ENCODE measurements at regions of chr4 and their contacts with region 1.

Region 1: DNA sequence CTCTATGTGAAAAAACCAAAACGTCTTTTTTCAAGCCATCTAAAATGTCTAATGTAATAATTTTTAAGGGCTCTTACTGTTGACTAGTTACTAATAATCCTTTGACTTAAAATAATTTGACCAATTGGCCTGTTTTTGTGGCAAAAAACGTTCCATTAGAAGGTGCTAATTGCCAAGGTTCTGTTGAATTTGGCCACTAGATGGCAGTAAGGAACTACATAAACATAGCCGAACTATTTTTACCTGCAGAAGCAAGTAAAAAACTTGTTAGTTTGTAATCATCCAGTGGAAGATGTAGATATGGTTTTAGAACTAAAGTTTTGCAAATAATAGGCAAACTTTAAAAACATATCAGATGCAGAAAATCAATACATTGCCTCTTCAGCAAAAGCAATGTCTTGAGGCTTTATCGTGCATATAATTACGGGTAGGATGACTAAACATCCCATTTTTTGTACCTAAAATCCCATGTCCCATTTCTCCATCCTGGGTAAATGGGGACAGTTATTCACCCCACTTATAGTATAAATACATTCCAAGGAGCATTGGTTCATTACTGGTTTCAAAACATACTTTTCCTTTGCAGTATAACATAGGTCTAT is 57.6 kb downstream of the PROM1 start:
- DNase-seq: peak; percentile 54
- CTCF ChIP-seq: peak; percentile 76

Region 2: GRCh38 chr4:16169490-16169889 is 143.2 kb after region 1 on chr4:
- in situ Hi-C with region 1: no loop called
- DNase-seq: no peak
- CTCF ChIP-seq: no peak

Region 3: GRCh38 chr4:16264798-16265197 is 238.5 kb after region 1 on chr4:
- in situ Hi-C with region 1: loop called (anchors 10 kb)
- DNase-seq: peak; percentile 53
- CTCF ChIP-seq: peak; percentile 27

Region 4: DNA sequence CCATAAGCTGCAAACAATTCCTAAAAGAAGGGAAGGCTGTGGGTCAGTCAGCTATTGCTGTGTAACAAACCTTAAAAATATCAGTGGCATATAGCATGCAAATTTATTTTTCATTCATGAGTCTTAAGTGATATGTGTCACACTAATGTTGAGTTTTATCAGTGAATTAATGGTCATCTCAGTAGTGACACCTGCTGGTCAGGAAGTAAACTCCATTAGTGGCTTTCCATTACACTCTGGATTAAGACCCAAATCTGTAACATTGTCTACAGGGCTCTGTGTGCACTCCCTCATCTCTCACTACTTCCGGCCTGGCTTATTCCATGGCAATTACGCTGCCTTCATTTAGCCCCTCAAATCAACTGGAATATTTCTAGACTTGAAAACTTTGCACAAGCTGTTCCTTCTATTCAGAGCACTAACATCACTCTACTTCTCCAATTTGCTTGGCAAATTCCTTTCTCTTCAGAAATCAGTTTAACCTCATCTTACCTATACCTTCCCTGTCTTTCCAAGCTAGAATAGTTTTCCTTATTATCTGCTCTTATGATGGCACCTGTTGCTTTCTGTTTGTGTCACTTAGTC is 417.3 kb after region 1 on chr4:
- in situ Hi-C with region 1: loop called (anchors 25 kb)
- DNase-seq: peak; percentile 37
- CTCF ChIP-seq: peak; percentile 55